BJ (cell line): ENCODE measurements at regions of chr10 and their contacts with region 1.

Region 1: DNA sequence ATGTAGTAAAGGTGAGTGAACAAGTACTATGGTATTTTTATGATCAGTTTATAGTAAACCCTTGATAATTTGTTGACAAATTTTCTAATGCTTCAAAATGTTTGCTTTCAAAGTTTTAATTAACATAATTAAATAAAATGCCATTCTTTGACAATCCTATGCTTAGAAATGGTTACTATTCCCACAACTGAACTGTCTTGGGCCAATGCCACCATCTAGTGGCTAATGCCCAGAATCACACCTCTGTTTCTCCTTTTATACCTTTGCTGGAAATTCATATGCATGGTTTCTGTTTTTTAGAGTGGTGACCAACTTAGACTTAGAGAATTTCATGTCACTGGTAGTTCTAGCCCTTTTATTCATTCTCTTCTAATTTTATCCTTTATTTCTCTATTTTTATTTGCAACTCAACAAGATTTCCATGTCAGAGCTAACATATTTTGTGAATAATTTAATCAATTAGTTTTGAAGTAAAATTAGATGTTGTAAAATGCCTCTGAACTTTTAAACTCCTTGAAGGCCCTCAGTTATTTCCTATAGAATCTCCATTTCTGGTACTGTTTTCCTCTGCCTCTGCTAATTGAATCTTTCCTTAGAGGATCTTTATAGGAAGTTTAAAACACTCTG is 31.1 kb downstream of the PCGF5 start:
- DNase-seq: peak; percentile 1
- H3K4me3 ChIP-seq: no peak overlapping the region
- H3K27me3 ChIP-seq: no peaks in the 10 kb centered on the region
- CTCF ChIP-seq: peak; percentile 84

Region 2: GRCh38 chr10:90879062-90879461 is 372.5 kb before region 1 on chr10:
- CTCF ChIA-PET with region 1: interaction called, 12 read pairs
- POLR2A ChIA-PET with region 1: no interaction called
- DNase-seq: no peak
- H3K4me3 ChIP-seq: no peak overlapping the region
- H3K27me3 ChIP-seq: no peaks in the 10 kb centered on the region
- CTCF ChIP-seq: no peak

Region 3: DNA sequence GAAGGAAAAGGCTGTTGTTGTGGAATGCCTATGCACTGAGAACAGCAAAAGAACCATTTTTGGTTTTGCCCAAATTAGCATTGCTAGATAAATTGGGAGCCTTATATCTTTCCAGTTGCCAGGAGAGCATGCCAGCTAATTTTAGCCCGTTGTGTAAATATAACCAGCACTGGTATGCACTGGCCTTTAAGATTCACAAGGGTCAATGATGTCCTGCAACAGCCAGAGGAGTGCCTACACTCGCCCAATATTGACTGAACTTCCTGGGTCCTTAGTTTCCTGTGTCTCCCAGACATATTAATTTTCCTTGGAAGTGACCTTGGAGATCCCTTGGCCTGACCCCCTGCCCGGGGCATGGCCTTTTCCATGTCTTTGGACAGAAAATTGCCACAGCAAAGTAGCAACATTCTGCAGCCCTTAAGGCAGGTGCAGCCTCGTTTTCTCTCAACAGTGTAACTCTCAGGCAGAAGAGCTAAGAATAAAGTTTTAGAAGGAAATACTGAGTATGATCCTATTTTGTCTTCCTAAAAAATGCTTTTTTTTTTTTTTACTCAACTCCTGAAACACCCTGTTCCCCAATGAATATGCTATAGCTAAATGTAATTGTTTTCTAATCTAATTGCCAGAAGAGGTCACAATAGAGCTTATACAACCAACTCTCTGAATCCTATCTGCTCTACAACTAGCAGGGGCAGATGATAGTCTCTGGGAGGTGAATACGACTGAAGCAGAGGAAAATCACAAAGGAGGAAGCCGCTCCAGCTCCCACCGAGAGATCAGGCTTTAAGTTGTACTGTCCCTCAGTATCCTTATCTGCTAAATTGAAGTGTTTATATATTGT is 163.0 kb before region 1 on chr10:
- CTCF ChIA-PET with region 1: interaction called, 24 read pairs
- POLR2A ChIA-PET with region 1: interaction called, 7 read pairs
- DNase-seq: no peak
- H3K4me3 ChIP-seq: no peak overlapping the region
- H3K27me3 ChIP-seq: no peaks in the 10 kb centered on the region; the same call in none of the 2 replicates
- CTCF ChIP-seq: peak; percentile 29; the same call in 1 of the 2 replicates